Gastrocnemius medialis (tissue), 4 donors: ENCODE measurements at regions of chr9 and their contacts with region 1.

Region 1: GRCh38 chr9:1115370-1115769 is 65.2 kb downstream of the DMRT2 start:
- DNase-seq: no peak
- ATAC-seq: no peak
- H3K4me3 ChIP-seq: no peak overlapping the region
- H3K27ac ChIP-seq: no peak overlapping the region
- H3K4me1 ChIP-seq: no peaks in the 10 kb centered on the region
- H3K27me3 ChIP-seq: no peaks in the 10 kb centered on the region
- CTCF ChIP-seq: no peak
- POLR2A ChIP-seq: no peak

Region 2: GRCh38 chr9:1285514-1285913 is 170.1 kb after region 1 on chr9:
- in situ Hi-C with region 1: no loop called
- intact Hi-C with region 1: no loop called
- DNase-seq: no peak
- ATAC-seq: no peak
- H3K4me3 ChIP-seq: no peak overlapping the region
- H3K27ac ChIP-seq: no peak overlapping the region
- H3K4me1 ChIP-seq: no peaks in the 10 kb centered on the region
- H3K27me3 ChIP-seq: no peaks in the 10 kb centered on the region
- CTCF ChIP-seq: no peak
- POLR2A ChIP-seq: no peak

Region 3: DNA sequence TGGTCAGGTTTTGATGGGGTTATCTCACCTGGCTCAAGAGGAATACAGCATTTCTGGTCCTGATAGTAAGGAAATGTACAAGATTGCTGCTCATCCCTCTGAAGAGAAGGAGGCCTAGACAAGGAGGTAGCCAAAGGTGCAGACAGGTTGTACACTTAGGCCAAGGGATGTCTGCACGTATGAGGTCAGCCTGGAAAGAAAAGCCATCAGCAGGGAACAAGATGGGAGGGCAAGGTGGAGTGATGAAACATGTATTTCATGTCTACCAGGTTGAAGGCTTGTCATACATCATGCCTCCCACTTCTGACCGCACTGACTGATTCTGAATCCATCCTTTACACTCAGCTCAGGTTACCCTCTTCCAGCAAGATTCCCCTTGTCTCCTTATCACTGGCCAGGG is 1209.4 kb after region 1 on chr9:
- in situ Hi-C with region 1: no loop called
- intact Hi-C with region 1: loop called (anchors 5 kb)
- DNase-seq: no peak
- ATAC-seq: no peak
- H3K4me3 ChIP-seq: no peak overlapping the region
- H3K27ac ChIP-seq: no peak overlapping the region
- H3K4me1 ChIP-seq: no peaks in the 10 kb centered on the region
- H3K27me3 ChIP-seq: no peaks in the 10 kb centered on the region
- CTCF ChIP-seq: no peak
- POLR2A ChIP-seq: no peak